Activated CD4-positive, alpha-beta T cell treated with anti-CD3 and anti-CD28 coated beads, Interleukin-2, amount 10 ng/mL, durations not matched to agents 7 days and 5 days (primary cell): ENCODE measurements at regions of chr14 and their contacts with region 1.

Region 1: GRCh38 chr14:50018201-50018932 is 98.0 kb downstream of the VCPKMT start:
- DNase-seq: no peak
- H3K4me3 Mint-ChIP-seq: no peak overlapping the region
- H3K27ac Mint-ChIP-seq: no peak overlapping the region
- H3K4me1 Mint-ChIP-seq: peaks cover 52% of the 10 kb centered on the region
- H3K27me3 Mint-ChIP-seq: no peaks in the 10 kb centered on the region

Region 2: DNA sequence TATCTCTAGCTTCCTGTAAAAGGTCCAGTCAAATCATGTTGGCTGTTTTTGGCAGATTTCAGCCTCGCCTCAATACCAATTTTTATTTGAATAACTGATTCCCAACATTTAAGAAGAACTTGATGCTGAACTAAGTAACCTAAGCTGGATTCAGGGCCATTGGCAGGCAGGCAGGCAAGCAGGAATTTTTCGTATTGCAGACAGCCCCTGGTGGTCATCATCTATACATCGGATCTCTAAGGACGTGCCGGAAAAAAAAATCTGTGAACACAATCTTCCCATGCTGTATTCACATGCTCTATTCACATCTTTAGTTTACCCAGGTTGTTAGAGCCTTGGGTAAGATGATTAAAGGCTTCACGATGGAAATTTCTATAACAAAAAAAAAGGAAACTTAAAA is 91.0 kb after region 1 on chr14:
- CTCF ChIA-PET with region 1: no interaction called
- POLR2A ChIA-PET with region 1: interaction called, 15 read pairs
- DNase-seq: no peak
- H3K4me3 Mint-ChIP-seq: no peak overlapping the region
- H3K27ac Mint-ChIP-seq: no peak overlapping the region
- H3K4me1 Mint-ChIP-seq: peaks cover 22% of the 10 kb centered on the region
- H3K27me3 Mint-ChIP-seq: no peaks in the 10 kb centered on the region

Region 3: DNA sequence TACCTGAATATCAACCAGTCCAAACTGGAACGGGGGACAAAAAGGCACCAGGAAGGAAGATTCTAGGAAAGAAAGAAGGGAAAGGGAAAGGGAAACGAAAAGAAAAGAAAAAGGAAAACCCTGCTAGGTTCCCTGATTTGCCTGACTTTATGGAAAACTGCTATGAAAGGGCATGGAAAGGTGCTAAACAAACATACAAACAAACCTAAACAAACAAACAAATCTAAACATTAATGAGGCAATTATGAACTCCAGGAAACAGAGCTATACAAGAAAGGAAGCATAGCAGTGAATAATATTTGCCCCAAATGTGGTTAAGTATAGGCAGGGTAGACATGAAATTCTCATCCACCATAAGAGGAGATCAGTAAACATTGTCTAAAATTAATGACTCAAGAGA is 109.9 kb after region 1 on chr14:
- CTCF ChIA-PET with region 1: no interaction called
- POLR2A ChIA-PET with region 1: no interaction called
- DNase-seq: no peak
- H3K4me3 Mint-ChIP-seq: no peak overlapping the region
- H3K27ac Mint-ChIP-seq: no peak overlapping the region
- H3K4me1 Mint-ChIP-seq: peaks cover 6% of the 10 kb centered on the region
- H3K27me3 Mint-ChIP-seq: no peaks in the 10 kb centered on the region